ENCODE measurements at regions of chr18 and their contacts with region 1.

Region 1: DNA sequence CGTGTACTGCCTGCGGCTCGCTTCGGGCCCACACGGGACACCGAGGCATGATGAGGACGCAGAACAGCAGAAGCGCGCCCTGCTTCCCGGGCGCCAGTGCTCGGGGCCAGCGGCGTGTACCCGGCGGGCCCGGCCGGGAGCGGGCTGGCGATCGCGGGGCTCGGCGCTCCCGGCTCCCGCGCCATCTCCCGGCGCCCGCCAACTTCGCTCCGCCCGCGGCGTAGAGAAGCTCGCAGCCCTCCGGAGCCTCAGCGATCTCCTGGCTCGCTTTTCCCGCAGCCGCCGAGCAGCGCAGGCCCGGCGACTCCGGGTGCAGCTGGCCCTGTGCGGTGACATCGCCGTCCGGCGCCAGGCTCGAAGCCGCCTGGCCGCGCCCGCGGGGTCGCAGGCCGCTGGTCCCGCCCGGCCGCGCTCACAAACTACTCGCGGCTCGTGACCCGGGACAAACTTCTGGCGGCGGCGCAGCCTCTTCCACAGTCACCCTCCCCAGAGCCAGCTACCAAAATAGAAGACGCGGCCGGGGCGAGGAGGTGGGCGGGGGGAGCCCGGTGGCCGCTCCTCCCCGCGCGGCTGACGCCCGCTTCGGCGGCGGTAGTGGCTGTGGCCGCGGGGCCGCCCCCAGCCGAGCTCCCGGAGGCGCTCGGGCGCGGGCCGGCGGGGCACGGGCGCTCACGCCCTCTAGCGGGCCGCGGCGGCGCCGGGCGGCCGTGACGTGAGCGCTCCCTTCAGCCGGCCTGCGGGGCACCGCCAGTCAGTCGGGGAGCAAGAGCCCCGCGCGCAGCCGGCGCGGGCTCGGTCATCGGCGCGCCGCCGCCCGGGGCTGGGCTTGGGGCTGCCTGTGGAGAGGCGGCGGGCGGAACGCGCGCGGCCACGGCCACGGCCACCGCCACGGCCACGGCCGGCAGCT is at the start of gene PTPRM:
- DNase-seq: peak; percentile 28 to 85 (median 68)
- H3K4me3 ChIP-seq: peak within 1 kb of the TSS; percentile 54 to 87 (median 76)
- H3K27ac ChIP-seq: peak within 1 kb of the TSS; percentile 49 to 99 (median 94)
- H3K27me3 ChIP-seq: peaks cover 0 to 3% (median 0%) of the 10 kb centered on the region in 45 donors
- CTCF ChIP-seq: peak in 37 of 56 donors; percentile 1 to 66 (median 28)
- total RNA-seq, gene PTPRM: 63.9 to 139 (median 104) TPM

Region 2: DNA sequence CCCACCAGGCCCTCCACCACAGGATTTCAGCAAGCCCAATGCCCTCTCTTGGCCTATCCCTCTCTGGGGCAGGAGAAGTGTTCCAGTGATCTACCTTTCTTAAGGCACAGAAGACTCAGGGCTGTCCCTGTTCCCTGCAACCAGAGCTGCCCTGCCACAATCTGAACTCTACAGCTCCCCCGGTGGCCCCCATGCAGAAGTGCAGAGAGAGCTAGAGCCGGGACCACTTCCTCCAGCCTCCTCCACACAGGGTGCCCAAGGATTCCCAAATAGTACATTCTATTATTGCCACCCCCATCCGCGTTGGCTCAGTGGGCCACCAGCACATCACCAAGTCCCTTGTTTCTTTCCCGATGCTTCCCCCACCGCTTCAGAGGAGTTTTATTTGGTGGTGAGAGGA is 114.5 kb before region 1 on chr18:
- intact Hi-C with region 1: loop called in 1 of 2 experiments (anchors 5 kb)
- DNase-seq: peak in 1 of 10 donors; percentile 54
- H3K4me3 ChIP-seq: no peak overlapping the region
- H3K27ac ChIP-seq: no peak overlapping the region
- H3K27me3 ChIP-seq: peaks cover 0 to 4% (median 0%) of the 10 kb centered on the region in 45 donors
- CTCF ChIP-seq: peak in 53 of 56 donors; percentile 27 to 66 (median 54)

Region 3: GRCh38 chr18:7459851-7460770 is 106.7 kb before region 1 on chr18:
- intact Hi-C with region 1: loop called in 1 of 2 experiments (anchors 2 kb)
- DNase-seq: peak in 8 of 10 donors; percentile 15 to 80 (median 60)
- H3K4me3 ChIP-seq: peak overlapping the region in 58 of 59 donors; percentile 3 to 63 (median 37)
- H3K27ac ChIP-seq: peak overlapping the region in 58 of 59 donors; percentile 1 to 96 (median 82)
- H3K27me3 ChIP-seq: peaks cover 0 to 2% (median 0%) of the 10 kb centered on the region in 45 donors
- CTCF ChIP-seq: peak in 2 of 56 donors; percentile 6 to 13

Region 4: GRCh38 chr18:7637269-7637668 is 70.4 kb after region 1 on chr18:
- intact Hi-C with region 1: no loop called
- DNase-seq: no peak
- H3K4me3 ChIP-seq: no peak overlapping the region
- H3K27ac ChIP-seq: no peak overlapping the region
- H3K27me3 ChIP-seq: no peaks in the 10 kb centered on the region
- CTCF ChIP-seq: no peak

Region 5: GRCh38 chr18:7878265-7879211 is 311.7 kb after region 1 on chr18:
- intact Hi-C with region 1: no loop called
- DNase-seq: no peak
- H3K4me3 ChIP-seq: no peak overlapping the region
- H3K27ac ChIP-seq: no peak overlapping the region
- H3K27me3 ChIP-seq: no peaks in the 10 kb centered on the region
- CTCF ChIP-seq: no peak

Region 6: DNA sequence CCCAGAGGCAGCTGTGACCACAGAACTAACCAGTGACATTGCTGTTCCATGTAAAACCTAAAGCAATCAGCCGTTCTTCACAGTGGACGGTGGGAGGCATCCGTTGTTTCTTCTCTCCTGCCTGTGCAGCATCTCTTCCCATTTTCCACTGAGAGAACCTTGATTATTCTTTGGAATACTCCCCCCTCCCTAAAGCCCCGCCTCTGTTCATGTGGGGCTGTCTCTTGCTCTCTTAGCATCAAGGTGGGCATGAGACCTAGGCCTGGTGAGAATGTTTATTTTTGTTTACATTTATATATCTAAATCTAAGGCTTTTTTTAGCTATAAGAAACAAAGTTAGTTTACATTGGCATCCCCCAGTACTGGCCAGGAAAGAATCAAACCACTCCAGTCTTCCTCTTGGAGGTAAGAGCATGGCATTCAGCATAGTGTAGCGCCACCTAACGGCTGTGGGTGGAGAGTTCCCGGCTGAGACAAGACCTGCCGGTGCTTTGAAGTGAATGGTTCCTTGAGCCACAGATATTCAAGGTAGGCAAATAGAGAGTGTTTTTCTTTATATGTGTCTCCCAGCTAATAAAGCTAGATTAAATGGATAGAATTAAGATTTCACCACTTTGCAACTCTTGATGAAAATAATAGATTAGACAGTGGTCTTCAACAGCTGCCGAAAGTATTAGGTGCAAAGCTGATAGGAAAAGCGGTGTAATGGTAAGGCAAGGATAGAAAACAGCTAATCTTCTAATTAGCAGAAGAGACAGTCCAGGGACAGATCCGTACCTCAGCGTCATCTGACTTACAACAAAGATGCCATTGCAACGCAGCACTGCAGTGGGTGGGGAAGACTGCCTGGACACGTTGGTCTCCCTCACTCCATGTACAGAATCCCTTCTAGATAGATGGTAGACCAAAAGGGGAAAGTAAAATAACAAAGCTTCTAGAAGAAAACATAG is 822.8 kb after region 1 on chr18:
- intact Hi-C with region 1: loop called in 1 of 2 experiments (anchors 5 kb)
- DNase-seq: peak in 9 of 10 donors; percentile 17 to 82 (median 64)
- H3K4me3 ChIP-seq: no peak overlapping the region
- H3K27ac ChIP-seq: no peak overlapping the region
- H3K27me3 ChIP-seq: no peaks in the 10 kb centered on the region
- CTCF ChIP-seq: peak in 55 of 56 donors; percentile 36 to 90 (median 81)

Region 7: GRCh38 chr18:8450013-8450412 is 883.2 kb after region 1 on chr18:
- intact Hi-C with region 1: no loop called
- DNase-seq: no peak
- H3K4me3 ChIP-seq: no peak overlapping the region
- H3K27ac ChIP-seq: no peak overlapping the region
- H3K27me3 ChIP-seq: no peaks in the 10 kb centered on the region
- CTCF ChIP-seq: peak in 14 of 56 donors; percentile 13 to 29 (median 18)